ENCODE measurements at regions of chrX and their contacts with region 1.

Region 1: GRCh38 chrX:107845625-107846024 is 20.0 kb downstream of the MID2 start:
- DNase-seq: no peak
- H3K4me3 Mint-ChIP-seq: no peak overlapping the region
- H3K27ac Mint-ChIP-seq: no peak overlapping the region
- H3K4me1 Mint-ChIP-seq: no peaks in the 10 kb centered on the region
- H3K27me3 Mint-ChIP-seq: no peaks in the 10 kb centered on the region

Region 2: GRCh38 chrX:107826238-107827029 is 19.2 kb before region 1 on chrX:
- intact Hi-C with region 1: loop called (anchors 1 kb)
- DNase-seq: peak; percentile 1
- H3K4me3 Mint-ChIP-seq: peak overlapping the region; percentile 83
- H3K27ac Mint-ChIP-seq: peak overlapping the region; percentile 86
- H3K4me1 Mint-ChIP-seq: peaks cover 34% of the 10 kb centered on the region
- H3K27me3 Mint-ChIP-seq: peaks cover 8% of the 10 kb centered on the region

Region 3: DNA sequence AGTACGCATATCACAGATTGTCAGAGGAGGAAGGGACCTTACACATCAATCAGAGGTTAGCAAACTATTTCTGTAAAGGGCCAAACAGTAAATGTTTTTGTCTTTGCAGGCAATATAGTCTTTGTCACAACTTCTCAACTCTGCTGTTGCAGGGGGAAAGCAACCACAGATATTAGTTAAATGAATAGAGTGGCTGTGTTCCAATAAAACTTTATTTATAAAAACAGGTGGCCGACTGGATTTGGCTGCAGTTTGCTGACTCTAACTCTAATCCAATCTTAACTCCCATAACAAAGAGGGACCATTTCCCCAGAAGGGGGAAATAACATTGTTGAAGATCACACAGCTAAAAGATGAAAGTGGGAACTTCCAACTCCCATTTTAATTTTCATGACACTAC is 524.1 kb after region 1 on chrX:
- intact Hi-C with region 1: no loop called
- DNase-seq: no peak
- H3K4me3 Mint-ChIP-seq: no peak overlapping the region
- H3K27ac Mint-ChIP-seq: no peak overlapping the region
- H3K4me1 Mint-ChIP-seq: no peaks in the 10 kb centered on the region
- H3K27me3 Mint-ChIP-seq: no peaks in the 10 kb centered on the region